Mammary epithelial cell (primary cell): ENCODE measurements at regions of chr2 and their contacts with region 1.

Region 1: DNA sequence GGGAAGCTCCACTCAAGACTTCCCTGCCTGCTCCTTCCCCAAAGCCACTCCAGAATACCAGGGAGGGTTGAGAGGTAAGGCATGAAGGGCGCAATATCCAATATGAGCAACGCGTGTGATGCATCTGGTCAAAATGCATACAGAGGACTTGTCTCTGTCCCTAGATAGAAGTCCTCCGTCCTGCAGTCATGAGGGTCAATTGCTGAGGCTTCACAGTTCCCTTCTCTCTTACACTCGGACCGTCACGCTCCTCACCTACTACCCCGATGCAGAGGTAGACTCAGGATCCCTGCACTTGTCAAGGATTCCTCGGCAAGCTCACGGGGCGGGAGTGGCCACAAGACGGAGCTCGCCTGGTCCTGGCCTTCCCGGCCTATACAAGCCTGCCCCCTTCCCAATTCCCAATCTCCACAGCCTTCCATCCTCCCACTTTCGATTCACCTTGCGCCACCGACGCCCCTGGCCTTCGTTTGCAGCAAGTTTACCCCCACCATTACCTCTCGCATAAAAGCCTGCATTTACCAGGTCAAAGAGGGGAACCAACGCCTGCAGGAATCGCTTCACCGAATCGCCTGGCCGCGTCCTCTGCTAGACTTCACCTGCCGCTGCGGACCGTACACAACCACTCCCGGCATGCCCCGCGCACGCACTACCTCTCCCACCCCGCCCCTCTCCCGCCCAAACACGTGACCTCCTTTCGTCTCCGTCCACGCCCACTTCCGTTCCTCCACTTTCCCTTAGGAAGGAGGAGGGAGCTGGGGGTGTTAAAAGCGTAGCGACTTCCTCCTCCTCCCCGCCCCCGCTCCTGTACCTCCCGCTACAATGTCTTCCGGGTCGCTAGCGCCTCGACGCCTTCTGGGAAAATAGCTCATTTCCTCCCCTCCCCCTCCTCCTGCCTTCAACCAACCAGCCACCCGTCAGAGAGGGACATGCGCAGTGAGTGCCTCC is at the start of gene ORC4:
- DNase-seq: peak; percentile 100
- H3K4me3 ChIP-seq: peak within 1 kb of the TSS; percentile 85 to 99 (median 94)
- H3K27ac ChIP-seq: peak within 1 kb of the TSS; percentile 88
- H3K4me1 ChIP-seq: peaks cover 7% of the 10 kb centered on the region
- H3K27me3 ChIP-seq: no peaks in the 10 kb centered on the region
- CTCF ChIP-seq: peak; percentile 34 to 69
- total RNA-seq, gene ORC4: 38.9 to 47.0 TPM

Region 2: DNA sequence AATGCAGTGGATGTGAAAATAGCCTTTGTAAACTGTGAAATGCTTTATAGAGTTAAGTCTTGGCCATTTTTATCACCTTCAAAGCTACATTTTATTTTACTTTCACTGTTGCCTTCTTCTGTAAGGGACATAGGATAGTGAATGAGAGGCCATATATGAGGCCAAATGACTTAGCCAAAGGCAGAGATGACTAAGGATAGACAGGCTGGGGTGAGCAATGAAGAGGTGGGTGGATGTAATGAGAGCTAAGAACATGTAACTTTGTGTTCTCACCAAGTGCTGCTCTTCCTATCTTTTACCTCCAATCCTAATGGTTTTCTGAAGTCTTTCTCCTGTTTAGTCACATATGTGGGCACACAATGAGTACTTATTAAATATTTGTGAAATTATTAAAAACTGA is 102.4 kb after region 1 on chr2:
- CTCF ChIA-PET with region 1: interaction called, 13 read pairs
- dilution Hi-C with region 1: no loop called
- in situ Hi-C with region 1: no loop called
- intact Hi-C with region 1: loop called (anchors 5 kb)
- DNase-seq: peak; percentile 80
- H3K4me3 ChIP-seq: no peak overlapping the region
- H3K27ac ChIP-seq: peak overlapping the region; percentile 20
- H3K4me1 ChIP-seq: peaks cover 15% of the 10 kb centered on the region
- H3K27me3 ChIP-seq: no peaks in the 10 kb centered on the region
- CTCF ChIP-seq: no peak

Region 3: GRCh38 chr2:148130581-148130980 is 110.2 kb after region 1 on chr2:
- CTCF ChIA-PET with region 1: interaction called, 13 read pairs
- dilution Hi-C with region 1: no loop called
- in situ Hi-C with region 1: no loop called
- intact Hi-C with region 1: no loop called
- DNase-seq: peak; percentile 39
- H3K4me3 ChIP-seq: no peak overlapping the region
- H3K27ac ChIP-seq: no peak overlapping the region
- H3K4me1 ChIP-seq: peaks cover 5% of the 10 kb centered on the region
- H3K27me3 ChIP-seq: no peaks in the 10 kb centered on the region
- CTCF ChIP-seq: no peak